ENCODE measurements at regions of chr6 and their contacts with region 1.

Region 1: GRCh38 chr6:88982720-88983119 is 19.3 kb upstream of the RNGTT start:
- DNase-seq: peak; percentile 58
- CTCF ChIP-seq: peak; percentile 72

Region 2: GRCh38 chr6:89242574-89243330 is 260.0 kb after region 1 on chr6:
- in situ Hi-C with region 1: loop called (anchors 25 kb)
- DNase-seq: peak; percentile 35
- CTCF ChIP-seq: peak; percentile 38

Region 3: GRCh38 chr6:89375427-89376267 is 392.9 kb after region 1 on chr6:
- in situ Hi-C with region 1: loop called (anchors 25 kb)
- DNase-seq: peak; percentile 26
- CTCF ChIP-seq: peak; percentile 58